ENCODE measurements at regions of chr14 and their contacts with region 1.

Region 1: DNA sequence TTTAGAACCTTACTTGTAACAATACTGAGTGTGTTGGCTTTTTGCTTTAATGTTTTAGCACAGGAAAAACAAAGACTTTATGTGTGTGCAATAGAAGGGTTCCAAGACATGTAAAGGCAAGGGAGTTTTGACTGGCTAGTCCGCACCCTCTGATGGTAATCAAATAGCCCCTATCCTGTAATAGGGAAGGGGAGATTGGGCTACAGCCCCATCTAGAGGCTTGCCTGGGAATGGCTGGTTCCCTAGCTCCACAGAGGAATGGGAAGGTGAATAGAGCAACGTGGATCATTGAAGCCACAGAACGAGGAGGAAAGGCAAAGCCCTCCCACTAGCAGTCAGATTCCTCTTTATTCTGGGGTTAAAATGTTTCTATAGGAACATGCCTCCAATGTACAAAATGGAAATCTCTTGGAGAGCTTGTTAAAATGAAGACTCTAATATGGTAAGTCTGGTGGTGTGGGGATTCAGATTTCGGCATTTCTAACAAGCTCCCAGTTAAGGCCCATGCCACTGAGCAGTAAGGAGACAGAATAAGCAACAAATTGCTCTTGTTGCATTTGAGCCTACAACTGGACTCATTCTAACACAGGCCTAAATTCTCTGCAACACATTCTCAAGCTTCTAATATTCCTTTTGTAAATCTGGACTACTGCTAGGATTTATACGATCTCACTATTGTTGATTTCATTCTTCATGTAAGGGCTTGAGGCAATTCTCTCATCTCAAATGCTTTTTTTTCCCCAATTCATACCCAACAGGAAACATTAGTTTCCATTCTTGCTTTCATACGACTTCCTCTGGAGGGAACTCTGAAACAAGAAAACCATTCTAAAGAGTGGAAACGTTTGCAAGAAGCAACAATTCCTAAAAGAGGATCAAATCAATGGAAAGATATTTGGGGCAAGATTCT is 57.1 kb downstream of the NIN start:
- DNase-seq: peak in 2 of 5 donors; percentile 38 to 57
- H3K4me3 ChIP-seq: no peak overlapping the region
- H3K27ac ChIP-seq: no peak overlapping the region
- H3K4me1 ChIP-seq: peaks cover 3% of the 10 kb centered on the region
- H3K27me3 ChIP-seq: no peaks in the 10 kb centered on the region
- CTCF ChIP-seq: peak in 2 of 3 donors; percentile 22 to 35
- EP300 ChIP-seq: no peak
- POLR2A ChIP-seq: no peak

Region 2: GRCh38 chr14:50599700-50600444 is 174.0 kb before region 1 on chr14:
- intact Hi-C with region 1: loop called in 2 of 4 experiments (anchors 10 kb)
- DNase-seq: no peak
- H3K4me3 ChIP-seq: no peak overlapping the region
- H3K27ac ChIP-seq: no peak overlapping the region
- H3K4me1 ChIP-seq: no peaks in the 10 kb centered on the region
- H3K27me3 ChIP-seq: no peaks in the 10 kb centered on the region
- CTCF ChIP-seq: peak in 2 of 3 donors; percentile 36 to 47
- EP300 ChIP-seq: no peak
- POLR2A ChIP-seq: no peak

Region 3: GRCh38 chr14:50619556-50620141 is 154.2 kb before region 1 on chr14:
- intact Hi-C with region 1: loop called in 2 of 4 experiments (anchors 10 kb)
- DNase-seq: no peak
- H3K4me3 ChIP-seq: no peak overlapping the region
- H3K27ac ChIP-seq: no peak overlapping the region
- H3K4me1 ChIP-seq: no peaks in the 10 kb centered on the region
- H3K27me3 ChIP-seq: no peaks in the 10 kb centered on the region
- CTCF ChIP-seq: peak; percentile 18 to 64 (median 43)
- EP300 ChIP-seq: no peak
- POLR2A ChIP-seq: no peak

Region 4: GRCh38 chr14:50658203-50658602 is 115.7 kb before region 1 on chr14:
- intact Hi-C with region 1: no loop called
- DNase-seq: no peak
- H3K4me3 ChIP-seq: no peak overlapping the region
- H3K27ac ChIP-seq: peak overlapping the region in 1 of 2 donors; percentile 54
- H3K4me1 ChIP-seq: peaks cover 10% of the 10 kb centered on the region
- H3K27me3 ChIP-seq: no peaks in the 10 kb centered on the region
- CTCF ChIP-seq: no peak
- EP300 ChIP-seq: no peak
- POLR2A ChIP-seq: no peak

Measured in ovary (tissue), 10 donors.